ENCODE measurements at regions of chr10 and their contacts with region 1.

Region 1: DNA sequence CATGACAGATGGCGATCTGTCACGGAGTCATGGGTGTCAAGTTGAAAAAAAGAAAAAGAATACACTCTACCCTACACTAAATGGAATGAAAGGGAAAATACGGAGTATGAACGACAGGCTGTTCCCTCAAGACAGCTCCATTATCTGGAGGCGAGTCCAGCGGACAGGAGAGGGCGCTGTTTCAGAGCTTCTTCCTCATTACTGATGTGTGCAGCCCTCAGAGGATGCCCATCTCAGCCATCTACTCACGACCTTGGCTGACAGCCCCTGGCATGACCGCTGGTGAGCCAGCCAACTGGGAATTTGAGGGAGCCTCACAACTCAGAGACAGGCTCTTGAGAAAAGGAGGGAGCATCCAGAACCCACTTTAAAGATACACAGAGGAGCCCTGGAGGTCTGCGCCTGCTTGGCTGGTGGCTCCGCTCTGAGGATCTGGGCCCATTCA is 49.6 kb upstream of the SMNDC1 start:
- DNase-seq: peak; percentile 69 to 88
- ATAC-seq: peak; percentile 70 to 93
- H3K4me3 ChIP-seq: no peak overlapping the region
- H3K27ac ChIP-seq: peak overlapping the region; percentile 79 to 83
- H3K4me1 ChIP-seq: peaks cover 58% of the 10 kb centered on the region
- CTCF ChIP-seq: peak; percentile 76
- EP300 ChIP-seq: no peak
- POLR2A ChIP-seq: no peak
- RAD21 ChIP-seq: peak; percentile 75 to 89

Region 2: GRCh38 chr10:110368002-110368401 is 13.7 kb after region 1 on chr10:
- CTCF ChIA-PET with region 1: interaction called, 47 read pairs
- POLR2A ChIA-PET with region 1: no interaction called
- DNase-seq: no peak
- ATAC-seq: peak in 1 of 2 experiments; percentile 27; a peak in 1 of 6 replicates
- H3K4me3 ChIP-seq: no peak overlapping the region
- H3K27ac ChIP-seq: peak overlapping the region; percentile 27 to 64; a peak in 5 of 6 replicates
- H3K4me1 ChIP-seq: peaks cover 45% of the 10 kb centered on the region
- CTCF ChIP-seq: no peak
- EP300 ChIP-seq: no peak
- POLR2A ChIP-seq: no peak
- RAD21 ChIP-seq: no peak

Region 3: DNA sequence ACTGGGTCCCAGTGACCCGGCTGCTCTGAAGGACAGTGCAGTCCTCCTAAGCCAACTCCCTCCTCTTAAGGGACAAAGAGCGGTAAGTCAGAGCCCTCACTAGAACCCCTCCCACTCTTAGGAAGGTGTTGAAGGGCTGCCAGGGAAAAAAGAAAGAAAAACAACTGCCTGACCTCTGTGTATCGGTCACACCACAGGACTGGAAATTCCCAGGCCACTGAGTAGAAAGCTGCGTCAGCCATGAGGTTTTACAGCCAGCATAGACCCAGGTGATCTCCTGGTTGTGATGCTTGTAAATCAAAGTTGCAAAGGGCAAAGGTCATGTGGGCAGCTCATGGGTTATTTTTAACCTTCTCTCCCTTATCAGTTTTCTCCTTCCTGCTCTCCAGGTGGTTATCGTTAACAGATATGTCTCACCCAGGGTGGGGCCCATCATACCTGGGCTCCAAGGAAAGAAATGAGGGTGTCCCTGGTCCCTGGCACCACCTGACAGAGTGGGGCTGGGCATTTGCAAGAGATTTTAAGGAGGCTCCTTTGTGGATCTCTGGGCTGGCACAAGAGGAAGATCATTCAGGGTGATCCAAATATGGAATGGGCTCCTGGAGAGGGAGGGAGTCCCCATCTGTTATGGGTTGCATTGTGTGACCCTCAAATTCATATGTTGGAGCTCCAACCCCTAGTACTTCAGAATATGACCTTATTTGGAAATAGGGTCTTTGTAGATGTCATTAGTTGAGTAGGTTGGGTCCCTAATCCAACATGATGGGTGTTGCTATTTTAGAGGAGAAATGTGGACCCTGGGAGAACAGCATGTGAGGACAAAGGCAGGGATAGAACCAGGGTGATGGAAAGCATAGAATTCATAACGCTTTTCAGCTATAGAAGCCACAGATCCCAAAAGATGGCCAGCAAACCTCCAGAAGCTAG is 41.6 kb after region 1 on chr10:
- CTCF ChIA-PET with region 1: interaction called, 70 read pairs
- POLR2A ChIA-PET with region 1: interaction called, 4 read pairs
- DNase-seq: peak; percentile 79 to 98
- ATAC-seq: peak; percentile 24 to 63; a peak in 4 of 6 replicates
- H3K4me3 ChIP-seq: no peak overlapping the region
- H3K27ac ChIP-seq: peak overlapping the region; percentile 99
- H3K4me1 ChIP-seq: peaks cover 84% of the 10 kb centered on the region
- CTCF ChIP-seq: no peak
- EP300 ChIP-seq: peak; percentile 89 to 98; a peak in 4 of 5 replicates
- POLR2A ChIP-seq: no peak
- RAD21 ChIP-seq: peak in 1 of 2 experiments; percentile 58; a peak in 4 of 5 replicates

Region 4: DNA sequence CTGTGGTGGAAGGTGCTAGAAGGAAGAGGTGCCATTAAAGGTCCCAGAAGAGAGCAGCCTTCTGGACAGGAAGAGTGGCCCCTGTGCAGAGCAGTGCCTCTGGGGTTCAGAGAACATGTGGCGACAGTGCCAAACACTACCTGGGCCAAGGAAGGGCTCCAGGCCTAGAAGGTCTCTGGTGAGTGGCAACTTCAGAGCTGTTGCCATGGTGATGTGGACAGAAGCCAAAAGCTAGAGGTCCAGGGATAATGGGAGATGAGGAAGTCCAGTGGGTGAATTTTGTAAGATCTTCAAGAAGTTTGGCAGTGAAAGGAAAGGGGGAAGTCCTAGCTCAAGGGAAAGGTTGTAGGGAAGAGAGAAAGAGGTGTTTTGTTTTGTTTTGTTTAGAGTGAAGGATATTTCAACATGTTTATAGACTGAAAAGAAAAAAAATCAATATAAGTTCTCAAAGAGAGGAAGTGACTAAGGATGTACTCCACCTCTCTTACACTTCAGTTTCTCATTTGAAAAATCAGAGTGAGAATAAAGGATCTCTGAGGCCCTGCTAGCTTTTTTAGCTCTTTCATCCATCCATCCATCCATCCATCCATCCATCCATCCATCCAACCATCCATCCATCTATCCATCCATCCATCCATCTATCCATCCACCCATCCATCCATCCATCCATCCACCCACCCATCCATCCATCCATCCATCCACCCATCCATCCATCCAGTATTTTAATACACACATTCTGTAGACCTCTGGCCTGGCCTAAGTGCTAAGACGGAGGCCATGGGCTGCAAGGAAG is 66.3 kb after region 1 on chr10:
- CTCF ChIA-PET with region 1: interaction called, 20 read pairs
- POLR2A ChIA-PET with region 1: no interaction called
- DNase-seq: peak in 1 of 2 experiments; percentile 78
- ATAC-seq: peak in 1 of 2 experiments; percentile 13; a peak in 3 of 6 replicates
- H3K4me3 ChIP-seq: no peak overlapping the region
- H3K27ac ChIP-seq: peak overlapping the region; percentile 96 to 99
- H3K4me1 ChIP-seq: peaks cover 90% of the 10 kb centered on the region
- CTCF ChIP-seq: no peak
- EP300 ChIP-seq: no peak
- POLR2A ChIP-seq: no peak
- RAD21 ChIP-seq: no peak

Region 5: GRCh38 chr10:110497438-110498086 is 143.2 kb after region 1 on chr10 and contains the start of gene DUSP5:
- CTCF ChIA-PET with region 1: interaction called, 38 read pairs
- POLR2A ChIA-PET with region 1: interaction called, 10 read pairs
- DNase-seq: peak; percentile 85 to 93
- ATAC-seq: peak; percentile 48 to 50
- H3K4me3 ChIP-seq: peak within 1 kb of the TSS; percentile 86
- H3K27ac ChIP-seq: peak within 1 kb of the TSS; percentile 96
- H3K4me1 ChIP-seq: peaks cover 49% of the 10 kb centered on the region
- CTCF ChIP-seq: peak; percentile 19; the same call in 1 of the 3 replicates
- EP300 ChIP-seq: no peak
- POLR2A ChIP-seq: peak; percentile 98
- RAD21 ChIP-seq: peak; percentile 9 to 22; a peak in 3 of 5 replicates
- polyA plus RNA-seq, gene DUSP5: 152 and 171 TPM in 2 replicates

Region 6: DNA sequence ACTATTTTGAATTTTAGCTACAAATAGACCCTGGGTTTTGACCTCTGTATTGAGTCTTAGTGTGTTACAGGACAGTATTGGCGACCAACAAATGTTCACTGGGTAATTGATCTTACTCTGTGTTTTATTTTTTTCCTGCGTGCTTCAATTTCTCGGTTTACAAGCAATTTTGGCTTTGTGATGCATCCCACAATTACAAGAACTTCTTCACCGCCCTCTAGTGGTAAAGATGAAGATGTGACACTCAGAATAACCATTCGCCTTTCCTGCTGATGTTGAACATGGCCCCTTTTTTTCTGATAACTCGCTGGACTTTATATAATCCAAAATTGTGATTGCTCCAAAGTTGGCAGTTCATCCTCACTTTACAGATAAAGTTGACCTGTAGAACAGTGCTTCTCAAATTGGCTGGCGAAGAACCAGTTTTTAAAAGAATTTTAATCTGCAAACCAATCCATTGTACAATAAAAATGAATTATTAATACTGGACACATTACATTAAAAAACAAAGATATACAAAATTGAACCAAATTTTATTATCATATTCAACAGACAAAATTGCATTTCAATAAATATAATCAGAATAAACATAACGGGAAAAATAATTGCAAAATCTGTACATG is 192.9 kb after region 1 on chr10:
- CTCF ChIA-PET with region 1: interaction called, 30 read pairs
- POLR2A ChIA-PET with region 1: no interaction called
- DNase-seq: peak; percentile 69
- ATAC-seq: peak; percentile 70 to 87; a peak in 5 of 6 replicates
- H3K4me3 ChIP-seq: no peak overlapping the region
- H3K27ac ChIP-seq: peak overlapping the region; percentile 64 to 74
- H3K4me1 ChIP-seq: peaks cover 10% of the 10 kb centered on the region
- CTCF ChIP-seq: peak; percentile 89
- EP300 ChIP-seq: no peak
- POLR2A ChIP-seq: no peak
- RAD21 ChIP-seq: peak; percentile 92 to 93